CD8-positive, alpha-beta T cell (primary cell): ENCODE measurements at regions of chr20 and their contacts with region 1.

Region 1: DNA sequence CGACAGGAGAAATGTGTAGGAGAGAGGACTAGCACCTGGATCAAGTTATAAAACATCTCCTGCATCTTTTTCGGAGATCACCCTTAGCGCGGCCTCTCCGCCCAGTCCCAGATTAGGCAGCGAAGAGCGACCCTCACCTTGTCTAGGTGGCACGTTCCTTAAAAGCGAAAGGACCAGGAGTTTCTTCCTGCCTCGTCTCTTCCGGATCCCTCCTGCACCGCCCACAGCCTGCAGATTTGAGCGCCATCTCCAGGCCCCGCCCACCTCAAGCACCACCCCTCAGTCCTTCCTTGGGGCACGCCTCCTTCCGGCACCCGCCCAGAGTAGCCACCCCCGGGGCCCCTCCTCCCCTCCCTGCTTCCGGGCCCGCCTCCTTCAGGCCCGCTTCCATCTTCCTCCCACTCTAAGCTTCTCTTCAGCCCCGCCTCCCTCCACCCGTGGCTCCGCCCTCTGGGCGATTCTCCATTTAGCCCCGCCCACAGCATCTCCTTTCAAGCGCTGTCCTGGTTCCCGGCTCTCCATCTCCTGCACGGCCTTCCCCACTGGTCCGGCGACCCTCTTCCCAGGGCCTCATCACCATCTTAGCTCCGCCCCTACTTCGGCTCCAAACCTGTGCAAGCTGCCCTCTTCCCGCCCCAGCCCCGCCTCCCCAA is 662 bp upstream of the RALY start:
- DNase-seq: peak; percentile 98 to 100 (median 99)
- ATAC-seq: peak; percentile 84
- H3K4me3 ChIP-seq: peak overlapping the region; percentile 97 to 98
- H3K4me3 Mint-ChIP-seq: peak overlapping the region; percentile 98
- H3K27ac ChIP-seq: peak overlapping the region; percentile 86 to 94
- H3K27ac Mint-ChIP-seq: peak overlapping the region; percentile 98
- H3K4me1 ChIP-seq: peaks cover 41% of the 10 kb centered on the region
- H3K4me1 Mint-ChIP-seq: peaks cover 59% of the 10 kb centered on the region
- H3K27me3 ChIP-seq: no peaks in the 10 kb centered on the region
- H3K27me3 Mint-ChIP-seq: no peaks in the 10 kb centered on the region
- CTCF ChIP-seq: no peak

Region 2: GRCh38 chr20:33489495-33490022 is 503.5 kb before region 1 on chr20:
- CTCF ChIA-PET with region 1: no interaction called
- POLR2A ChIA-PET with region 1: interaction called, 8 read pairs
- intact Hi-C with region 1: loop called in 1 of 2 experiments (anchors 1 kb)
- DNase-seq: peak; percentile 98 to 99 (median 99)
- ATAC-seq: peak; percentile 94
- H3K4me3 ChIP-seq: peak overlapping the region; percentile 58 to 89
- H3K4me3 Mint-ChIP-seq: peak overlapping the region; percentile 89
- H3K27ac ChIP-seq: peak overlapping the region; percentile 96 to 97
- H3K27ac Mint-ChIP-seq: peak overlapping the region; percentile 96
- H3K4me1 ChIP-seq: peaks cover 11% of the 10 kb centered on the region
- H3K4me1 Mint-ChIP-seq: peaks cover 19% of the 10 kb centered on the region
- H3K27me3 ChIP-seq: no peaks in the 10 kb centered on the region
- H3K27me3 Mint-ChIP-seq: no peaks in the 10 kb centered on the region
- CTCF ChIP-seq: no peak

Region 3: GRCh38 chr20:33731693-33732165 is 261.3 kb before region 1 on chr20 and contains the start of gene ZNF341:
- CTCF ChIA-PET with region 1: no interaction called
- POLR2A ChIA-PET with region 1: interaction called, 6 read pairs
- intact Hi-C with region 1: loop called in 1 of 2 experiments (anchors 2 kb)
- DNase-seq: peak; percentile 81 to 95 (median 89)
- ATAC-seq: peak; percentile 85
- H3K4me3 ChIP-seq: peak within 1 kb of the TSS; percentile 67 to 79
- H3K4me3 Mint-ChIP-seq: peak within 1 kb of the TSS; percentile 88
- H3K27ac ChIP-seq: peak within 1 kb of the TSS; percentile 60 to 81
- H3K27ac Mint-ChIP-seq: peak within 1 kb of the TSS; percentile 92
- H3K4me1 ChIP-seq: peaks cover 12% of the 10 kb centered on the region
- H3K4me1 Mint-ChIP-seq: peaks cover 20% of the 10 kb centered on the region
- H3K27me3 ChIP-seq: no peaks in the 10 kb centered on the region
- H3K27me3 Mint-ChIP-seq: no peaks in the 10 kb centered on the region
- CTCF ChIP-seq: peak; percentile 67
- total RNA-seq, gene ZNF341: 2.4 to 2.9 TPM

Region 4: DNA sequence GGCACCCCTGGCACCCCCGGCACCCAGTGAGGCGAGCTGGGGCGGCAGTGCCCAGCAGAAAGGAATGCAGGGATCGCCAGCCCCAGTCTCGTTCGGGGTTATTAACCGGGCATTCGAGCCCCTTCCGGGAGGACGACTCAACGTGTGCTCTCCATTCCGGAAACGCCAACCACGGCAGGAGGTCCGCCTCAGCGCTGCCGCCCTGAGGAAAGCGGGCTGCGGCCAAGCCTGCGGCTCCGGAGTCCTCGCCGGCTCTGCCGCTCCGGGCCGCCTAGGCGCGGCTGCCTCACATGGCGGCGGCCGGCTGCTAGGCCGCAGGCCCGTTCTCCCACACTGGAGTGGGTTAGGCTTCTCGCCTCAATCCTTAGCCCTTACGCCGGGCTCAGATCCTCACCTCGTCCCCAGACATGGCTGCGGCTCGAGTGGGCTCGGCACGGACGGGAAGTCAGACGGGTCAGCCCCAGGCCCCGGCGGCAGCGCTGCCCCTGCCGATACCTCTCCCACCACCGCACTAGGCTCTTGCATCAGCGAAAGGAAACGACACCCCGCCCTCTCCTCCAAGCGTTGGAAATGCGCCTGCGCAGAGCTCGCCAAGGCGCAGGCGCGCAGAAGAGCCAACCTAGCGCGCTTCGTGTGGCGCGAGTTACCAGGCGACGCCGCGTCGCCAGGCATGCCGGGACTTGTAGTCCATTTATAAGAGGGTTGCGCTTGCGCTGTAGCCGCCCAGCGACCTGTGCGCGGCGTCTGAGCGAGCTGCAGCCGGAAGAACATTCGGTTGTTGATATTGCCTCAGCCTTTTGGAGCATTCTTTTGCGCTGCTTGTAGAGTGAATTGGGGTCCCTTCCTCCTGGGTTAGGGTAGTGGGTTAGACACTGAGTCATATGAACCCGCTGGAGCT is 118.9 kb after region 1 on chr20 and contains the start of gene EIF2S2:
- CTCF ChIA-PET with region 1: interaction called, 3 read pairs
- POLR2A ChIA-PET with region 1: interaction called, 31 read pairs
- intact Hi-C with region 1: loop called (anchors 1 kb)
- DNase-seq: peak; percentile 91 to 99 (median 95)
- ATAC-seq: peak; percentile 89
- H3K4me3 ChIP-seq: peak within 1 kb of the TSS; percentile 81 to 86
- H3K4me3 Mint-ChIP-seq: peak within 1 kb of the TSS; percentile 96
- H3K27ac ChIP-seq: peak within 1 kb of the TSS; percentile 89 to 93
- H3K27ac Mint-ChIP-seq: peak within 1 kb of the TSS; percentile 98
- H3K4me1 ChIP-seq: peaks cover 34% of the 10 kb centered on the region
- H3K4me1 Mint-ChIP-seq: peaks cover 42% of the 10 kb centered on the region
- H3K27me3 ChIP-seq: no peaks in the 10 kb centered on the region
- H3K27me3 Mint-ChIP-seq: no peaks in the 10 kb centered on the region
- CTCF ChIP-seq: no peak
- total RNA-seq, gene EIF2S2: 19.4 to 19.6 TPM

Region 5: DNA sequence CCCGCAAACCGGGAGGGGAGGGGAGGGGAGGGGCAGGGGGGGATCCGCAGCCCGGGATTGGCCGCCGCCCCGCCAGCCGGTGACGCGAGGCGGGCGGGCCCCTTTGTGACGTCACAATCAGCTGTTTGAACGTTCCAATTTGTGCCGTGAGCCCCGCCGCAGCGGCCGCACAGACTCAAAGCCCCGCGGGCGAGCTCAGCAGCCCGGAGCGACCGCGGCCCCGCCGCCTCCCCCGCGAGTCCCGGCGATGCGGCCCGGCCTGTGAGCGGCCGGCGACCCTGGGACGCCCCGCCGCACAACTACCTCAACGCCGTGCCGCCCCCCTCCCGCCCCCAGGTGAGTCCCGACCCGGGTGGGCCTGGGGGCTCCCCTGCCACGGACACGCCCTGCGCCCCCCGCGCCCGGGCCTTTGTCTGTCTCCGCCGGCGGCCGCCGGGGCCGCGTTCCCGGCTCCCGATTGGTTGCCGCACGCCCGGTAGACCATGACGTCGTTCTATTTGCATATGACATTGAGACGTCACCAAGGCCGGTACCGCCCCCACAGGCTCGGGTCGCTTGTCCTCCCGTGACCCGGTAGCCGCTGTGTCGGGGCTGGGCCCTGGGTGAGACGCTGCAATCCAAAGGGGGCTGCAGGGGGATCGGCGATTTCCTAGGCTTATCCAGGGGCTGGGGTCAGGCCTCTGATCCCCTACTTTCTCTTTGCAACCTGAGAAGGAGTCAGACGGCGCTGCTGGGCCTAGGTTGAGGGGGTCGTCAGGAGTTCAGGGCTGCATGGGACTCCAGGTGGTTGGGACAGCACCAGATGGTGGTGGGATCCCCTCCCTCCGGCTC is 711.3 kb after region 1 on chr20 and contains the start of gene TP53INP2:
- CTCF ChIA-PET with region 1: no interaction called
- POLR2A ChIA-PET with region 1: no interaction called
- intact Hi-C with region 1: loop called in 1 of 2 experiments (anchors 10 kb)
- DNase-seq: peak; percentile 71 to 96 (median 87)
- ATAC-seq: peak; percentile 53
- H3K4me3 ChIP-seq: peak within 1 kb of the TSS; percentile 78 to 96
- H3K4me3 Mint-ChIP-seq: peak within 1 kb of the TSS; percentile 93
- H3K27ac ChIP-seq: peak within 1 kb of the TSS; percentile 71 to 96
- H3K27ac Mint-ChIP-seq: peak within 1 kb of the TSS; percentile 95
- H3K4me1 ChIP-seq: peaks cover 14% of the 10 kb centered on the region
- H3K4me1 Mint-ChIP-seq: peaks cover 22% of the 10 kb centered on the region
- H3K27me3 ChIP-seq: peaks cover 0 to 6% of the 10 kb centered on the region in 2 experiments
- H3K27me3 Mint-ChIP-seq: peaks cover 8% of the 10 kb centered on the region
- CTCF ChIP-seq: no peak
- total RNA-seq, gene TP53INP2: 101 to 103 TPM

Region 6: GRCh38 chr20:35771689-35772562 is 1778.9 kb after region 1 on chr20 and contains the start of gene PHF20:
- CTCF ChIA-PET with region 1: no interaction called
- POLR2A ChIA-PET with region 1: interaction called, 4 read pairs
- intact Hi-C with region 1: loop called in 1 of 2 experiments (anchors 5 kb)
- DNase-seq: peak; percentile 100
- ATAC-seq: peak; percentile 82
- H3K4me3 ChIP-seq: peak within 1 kb of the TSS; percentile 65 to 71
- H3K4me3 Mint-ChIP-seq: peak within 1 kb of the TSS; percentile 91
- H3K27ac ChIP-seq: peak within 1 kb of the TSS; percentile 87 to 95
- H3K27ac Mint-ChIP-seq: peak within 1 kb of the TSS; percentile 100
- H3K4me1 ChIP-seq: peaks cover 89% of the 10 kb centered on the region
- H3K4me1 Mint-ChIP-seq: peaks cover 81% of the 10 kb centered on the region
- H3K27me3 ChIP-seq: no peaks in the 10 kb centered on the region
- H3K27me3 Mint-ChIP-seq: no peaks in the 10 kb centered on the region
- CTCF ChIP-seq: no peak
- total RNA-seq, gene PHF20: 101 to 107 TPM